Calu3 (cell line): ENCODE measurements at regions of chr5 and their contacts with region 1.

Region 1: GRCh38 chr5:58849921-58850667 is 267.2 kb downstream of the RAB3C start:
- DNase-seq: peak; percentile 65
- H3K4me3 Mint-ChIP-seq: no peak overlapping the region
- H3K27ac Mint-ChIP-seq: no peak overlapping the region
- H3K4me1 Mint-ChIP-seq: no peaks in the 10 kb centered on the region
- H3K27me3 Mint-ChIP-seq: peaks cover 37% of the 10 kb centered on the region
- CTCF ChIP-seq: peak; percentile 24

Region 2: DNA sequence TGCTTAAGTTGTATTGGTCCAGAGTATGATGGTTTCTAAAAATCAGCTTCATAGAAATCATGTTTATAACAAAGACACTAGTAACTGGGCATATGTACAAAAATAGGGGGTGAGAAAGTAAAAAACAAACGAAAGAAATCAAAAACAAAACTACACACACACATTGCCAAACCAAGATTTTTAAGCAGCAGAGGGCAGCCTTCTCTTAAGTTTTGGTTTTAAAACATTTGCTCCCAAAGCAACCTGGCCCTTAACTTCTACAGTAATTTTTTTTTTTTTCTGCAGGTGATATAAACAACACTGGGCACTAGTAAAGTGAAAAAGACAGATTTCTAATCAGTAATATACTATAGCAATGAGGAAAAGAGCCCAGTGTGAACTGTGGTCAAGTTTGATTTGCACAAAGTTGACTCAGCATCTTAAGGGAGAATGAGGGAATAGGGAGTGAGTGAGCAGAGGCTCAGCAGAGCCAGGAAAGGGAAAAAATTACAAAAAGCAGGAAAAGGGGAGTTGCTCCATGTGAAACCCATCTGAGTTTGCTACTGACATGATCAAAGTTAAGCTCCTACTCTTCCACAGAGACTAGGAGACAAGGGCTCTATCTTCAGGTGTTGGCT is 372.2 kb before region 1 on chr5:
- CTCF ChIA-PET with region 1: interaction called, 4 read pairs
- intact Hi-C with region 1: loop called (anchors 1 kb)
- DNase-seq: no peak
- H3K4me3 Mint-ChIP-seq: no peak overlapping the region
- H3K27ac Mint-ChIP-seq: no peak overlapping the region
- H3K4me1 Mint-ChIP-seq: no peaks in the 10 kb centered on the region
- H3K27me3 Mint-ChIP-seq: no peaks in the 10 kb centered on the region
- CTCF ChIP-seq: no peak

Region 3: GRCh38 chr5:58498340-58498942 is 351.7 kb before region 1 on chr5:
- CTCF ChIA-PET with region 1: no interaction called
- intact Hi-C with region 1: loop called (anchors 1 kb)
- DNase-seq: peak; percentile 59
- H3K4me3 Mint-ChIP-seq: no peak overlapping the region
- H3K27ac Mint-ChIP-seq: no peak overlapping the region
- H3K4me1 Mint-ChIP-seq: no peaks in the 10 kb centered on the region
- H3K27me3 Mint-ChIP-seq: peaks cover 83% of the 10 kb centered on the region
- CTCF ChIP-seq: peak; percentile 50